MCF 10A (cell line): ENCODE measurements at regions of chr12 and their contacts with region 1.

Region 1: GRCh38 chr12:21677622-21678277 is 20.1 kb upstream of the LDHB start:
- DNase-seq: no peak
- H3K4me3 Mint-ChIP-seq: no peak overlapping the region
- H3K27ac Mint-ChIP-seq: no peak overlapping the region
- H3K4me1 Mint-ChIP-seq: no peaks in the 10 kb centered on the region
- H3K27me3 Mint-ChIP-seq: peaks cover 2% of the 10 kb centered on the region
- CTCF ChIP-seq: no peak

Region 2: DNA sequence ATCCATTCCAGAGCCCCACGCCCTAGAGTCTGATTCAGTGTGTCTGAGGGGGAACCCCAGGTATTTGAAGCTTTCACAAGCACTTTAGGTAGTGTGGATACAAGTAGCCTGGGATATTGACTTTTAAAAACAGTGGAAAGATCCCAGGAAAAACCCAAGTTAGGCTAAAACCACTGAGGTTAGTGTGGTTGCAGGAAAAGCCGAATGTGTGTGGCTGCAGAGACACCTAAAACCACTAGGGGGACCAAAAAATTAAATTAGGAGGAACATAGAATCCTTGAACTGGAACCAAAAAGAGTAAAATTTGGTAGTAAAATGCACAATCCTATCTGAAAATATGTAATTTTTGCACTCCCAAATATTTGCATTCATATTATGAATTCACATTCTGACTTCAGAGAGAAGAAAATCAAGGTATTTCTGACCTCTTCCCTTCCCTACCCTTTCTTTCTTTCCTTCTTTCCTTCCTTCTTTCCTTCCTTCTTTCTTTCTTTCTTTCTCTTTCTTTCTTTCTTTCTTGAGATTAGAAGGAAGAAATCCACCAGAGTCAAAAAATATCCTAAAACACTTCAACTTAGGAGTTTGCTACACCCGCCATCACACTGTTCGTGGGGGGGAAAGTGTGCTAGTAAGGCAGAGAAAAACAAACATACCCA is 380.9 kb before region 1 on chr12:
- CTCF ChIA-PET with region 1: interaction called, 3 read pairs
- POLR2A ChIA-PET with region 1: no interaction called
- intact Hi-C with region 1: loop called (anchors 1 kb)
- DNase-seq: peak; percentile 26
- H3K4me3 Mint-ChIP-seq: no peak overlapping the region
- H3K27ac Mint-ChIP-seq: no peak overlapping the region
- H3K4me1 Mint-ChIP-seq: no peaks in the 10 kb centered on the region
- H3K27me3 Mint-ChIP-seq: peaks cover 18% of the 10 kb centered on the region
- CTCF ChIP-seq: peak; percentile 49

Region 3: DNA sequence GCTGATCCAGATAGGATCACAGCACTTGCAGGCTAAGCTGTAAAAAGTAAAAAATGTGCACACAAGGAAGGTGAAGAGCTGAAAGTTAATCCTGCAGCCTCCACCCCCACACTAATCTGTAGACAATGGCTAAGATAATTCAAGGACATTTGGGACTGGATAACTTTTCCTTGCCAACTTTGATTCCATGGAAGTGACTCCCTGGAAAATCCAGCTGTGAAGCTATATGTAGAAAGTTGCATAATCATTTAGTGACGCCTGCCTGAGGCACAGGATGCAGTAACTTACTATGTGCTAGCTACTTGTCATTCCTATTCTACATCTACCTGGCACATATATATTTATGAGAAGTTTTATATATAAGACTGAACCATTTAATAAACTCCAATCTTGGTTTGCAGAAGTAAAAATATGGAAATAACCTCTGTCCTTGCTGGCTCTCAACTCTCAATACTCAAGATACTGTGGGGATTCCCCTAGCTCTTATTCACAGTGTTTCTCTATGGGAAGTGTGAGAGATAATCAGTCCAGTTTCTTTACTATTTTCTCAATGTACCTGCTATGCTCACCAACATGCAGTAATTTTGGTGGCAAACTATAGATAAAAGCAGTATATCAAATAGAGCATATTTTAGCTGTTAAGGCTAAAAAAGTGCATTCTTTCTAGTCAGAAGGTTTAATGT is 34.9 kb before region 1 on chr12:
- CTCF ChIA-PET with region 1: interaction called, 11 read pairs
- POLR2A ChIA-PET with region 1: interaction called, 4 read pairs
- intact Hi-C with region 1: no loop called
- DNase-seq: peak; percentile 48
- H3K4me3 Mint-ChIP-seq: no peak overlapping the region
- H3K27ac Mint-ChIP-seq: no peak overlapping the region
- H3K4me1 Mint-ChIP-seq: peaks cover 42% of the 10 kb centered on the region
- H3K27me3 Mint-ChIP-seq: no peaks in the 10 kb centered on the region
- CTCF ChIP-seq: no peak

Region 4: DNA sequence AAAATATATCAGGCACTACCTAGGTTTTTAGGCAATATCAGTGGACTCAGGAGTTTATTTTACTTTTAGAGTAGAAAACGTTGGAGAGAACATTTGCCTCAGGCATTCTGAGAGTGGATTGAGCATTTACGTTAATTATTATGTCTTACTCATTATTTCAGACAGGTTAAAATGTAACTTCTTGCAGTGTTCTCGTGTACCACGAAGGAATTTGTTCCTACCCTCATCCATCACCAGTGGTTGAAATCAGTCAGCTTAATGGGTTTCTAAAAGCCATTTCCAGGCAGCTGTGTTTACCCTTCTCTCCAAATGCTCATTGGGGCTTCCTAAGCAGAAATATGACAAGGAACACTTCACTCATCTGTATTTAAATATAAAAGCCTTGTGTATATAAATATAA is 11.0 kb before region 1 on chr12:
- CTCF ChIA-PET with region 1: interaction called, 30 read pairs
- POLR2A ChIA-PET with region 1: interaction called, 3 read pairs
- intact Hi-C with region 1: no loop called
- DNase-seq: no peak
- H3K4me3 Mint-ChIP-seq: no peak overlapping the region
- H3K27ac Mint-ChIP-seq: no peak overlapping the region
- H3K4me1 Mint-ChIP-seq: no peaks in the 10 kb centered on the region
- H3K27me3 Mint-ChIP-seq: no peaks in the 10 kb centered on the region
- CTCF ChIP-seq: no peak

Region 5: DNA sequence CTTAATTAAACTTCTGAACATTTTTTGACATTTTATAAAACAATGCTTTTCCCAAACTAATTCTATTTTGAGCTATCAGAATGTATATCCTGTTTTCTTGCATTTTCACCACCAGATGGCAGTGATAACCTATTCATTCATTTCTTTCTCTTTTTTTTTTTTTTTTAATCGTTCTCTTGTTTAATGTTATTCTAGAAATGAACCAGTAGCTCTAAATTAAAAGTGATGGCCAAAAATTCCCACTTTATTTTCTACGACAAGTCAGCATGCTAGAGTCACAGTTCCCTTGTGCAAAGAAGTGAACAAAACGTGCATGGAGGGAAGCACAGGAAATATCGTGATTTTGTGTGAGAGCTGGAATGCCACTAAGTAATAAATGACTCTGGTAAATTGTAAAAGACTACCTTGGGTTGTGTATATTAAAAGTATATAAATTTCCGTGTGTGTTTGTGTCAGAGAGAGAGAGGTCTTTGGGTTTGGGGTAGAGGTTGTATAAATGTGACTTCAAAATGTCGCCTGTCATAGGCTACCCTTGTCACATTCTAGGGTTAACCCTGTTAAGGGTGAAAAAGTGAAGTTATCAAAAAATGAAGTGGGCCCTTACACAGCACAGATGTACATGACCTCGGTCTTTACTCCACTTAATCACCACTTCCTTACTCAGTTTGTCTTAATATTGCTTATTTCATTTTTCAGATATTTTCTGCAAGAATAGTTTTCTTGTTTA is 20.3 kb after region 1 on chr12:
- CTCF ChIA-PET with region 1: interaction called, 12 read pairs
- POLR2A ChIA-PET with region 1: no interaction called
- intact Hi-C with region 1: no loop called
- DNase-seq: peak; percentile 52
- H3K4me3 Mint-ChIP-seq: peak overlapping the region; percentile 47
- H3K27ac Mint-ChIP-seq: no peak overlapping the region
- H3K4me1 Mint-ChIP-seq: peaks cover 5% of the 10 kb centered on the region
- H3K27me3 Mint-ChIP-seq: no peaks in the 10 kb centered on the region
- CTCF ChIP-seq: peak; percentile 41

Region 6: GRCh38 chr12:21764065-21764464 is 86.3 kb after region 1 on chr12:
- CTCF ChIA-PET with region 1: no interaction called
- POLR2A ChIA-PET with region 1: no interaction called
- intact Hi-C with region 1: no loop called
- DNase-seq: no peak
- H3K4me3 Mint-ChIP-seq: no peak overlapping the region
- H3K27ac Mint-ChIP-seq: no peak overlapping the region
- H3K4me1 Mint-ChIP-seq: peaks cover 10% of the 10 kb centered on the region
- H3K27me3 Mint-ChIP-seq: peaks cover 41% of the 10 kb centered on the region
- CTCF ChIP-seq: no peak